ENCODE measurements at regions of chr3 and their contacts with region 1.

Region 1: DNA sequence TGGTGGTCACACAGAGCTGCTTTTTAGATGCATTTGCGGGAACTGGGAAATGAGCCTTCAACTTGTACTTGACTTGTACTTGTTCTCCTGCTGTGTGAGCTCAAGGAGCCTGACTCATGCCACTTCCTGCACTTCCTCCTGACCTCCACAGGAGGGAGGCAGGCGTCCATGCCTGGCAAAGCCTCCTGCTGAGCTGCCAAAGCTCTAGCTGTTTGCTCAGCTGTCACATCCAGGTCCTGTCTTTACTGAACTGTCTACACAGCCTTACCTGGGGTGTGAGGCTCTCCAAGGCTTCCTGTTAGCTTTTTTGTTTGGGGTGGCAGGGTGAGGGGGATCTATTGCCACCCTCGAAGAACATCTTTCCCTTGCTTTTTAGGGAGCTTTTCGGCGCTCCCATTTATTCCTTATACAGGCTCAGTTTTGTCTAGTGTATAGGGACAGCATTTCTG is 6.4 kb downstream of the THPO start:
- DNase-seq: peak; percentile 89
- ATAC-seq: peak; percentile 93
- H3K4me3 ChIP-seq: no peak overlapping the region
- H3K27ac ChIP-seq: no peak overlapping the region
- H3K4me1 ChIP-seq: peaks cover 6% of the 10 kb centered on the region; the same call in 1 of the 2 replicates
- H3K27me3 ChIP-seq: peaks cover 25% of the 10 kb centered on the region
- CTCF ChIP-seq: peak; percentile 99
- POLR2A ChIP-seq: no peak
- RAD21 ChIP-seq: peak; percentile 100

Region 2: GRCh38 chr3:184469423-184469822 is 97.8 kb after region 1 on chr3:
- CTCF ChIA-PET with region 1: interaction called, 6 read pairs
- POLR2A ChIA-PET with region 1: no interaction called
- dilution Hi-C with region 1: no loop called
- in situ Hi-C with region 1: no loop called
- intact Hi-C with region 1: loop called (anchors 2 kb)
- DNase-seq: no peak
- ATAC-seq: peak; percentile 29; the same call in 1 of the 2 replicates
- H3K4me3 ChIP-seq: no peak overlapping the region
- H3K27ac ChIP-seq: no peak overlapping the region
- H3K4me1 ChIP-seq: peaks cover 4% of the 10 kb centered on the region; the same call in 1 of the 2 replicates
- H3K27me3 ChIP-seq: peaks cover 23% of the 10 kb centered on the region
- CTCF ChIP-seq: peak; percentile 42
- POLR2A ChIP-seq: no peak
- RAD21 ChIP-seq: peak; percentile 48

Region 3: GRCh38 chr3:184531626-184532280 is 160.2 kb after region 1 on chr3:
- CTCF ChIA-PET with region 1: interaction called, 5 read pairs
- POLR2A ChIA-PET with region 1: no interaction called
- dilution Hi-C with region 1: loop called (anchors 25 kb)
- in situ Hi-C with region 1: loop called (anchors 5 kb)
- intact Hi-C with region 1: no loop called
- DNase-seq: no peak
- ATAC-seq: no peak
- H3K4me3 ChIP-seq: no peak overlapping the region
- H3K27ac ChIP-seq: no peak overlapping the region
- H3K4me1 ChIP-seq: no peaks in the 10 kb centered on the region
- H3K27me3 ChIP-seq: peaks cover 52% of the 10 kb centered on the region
- CTCF ChIP-seq: no peak
- POLR2A ChIP-seq: no peak
- RAD21 ChIP-seq: no peak

Region 4: DNA sequence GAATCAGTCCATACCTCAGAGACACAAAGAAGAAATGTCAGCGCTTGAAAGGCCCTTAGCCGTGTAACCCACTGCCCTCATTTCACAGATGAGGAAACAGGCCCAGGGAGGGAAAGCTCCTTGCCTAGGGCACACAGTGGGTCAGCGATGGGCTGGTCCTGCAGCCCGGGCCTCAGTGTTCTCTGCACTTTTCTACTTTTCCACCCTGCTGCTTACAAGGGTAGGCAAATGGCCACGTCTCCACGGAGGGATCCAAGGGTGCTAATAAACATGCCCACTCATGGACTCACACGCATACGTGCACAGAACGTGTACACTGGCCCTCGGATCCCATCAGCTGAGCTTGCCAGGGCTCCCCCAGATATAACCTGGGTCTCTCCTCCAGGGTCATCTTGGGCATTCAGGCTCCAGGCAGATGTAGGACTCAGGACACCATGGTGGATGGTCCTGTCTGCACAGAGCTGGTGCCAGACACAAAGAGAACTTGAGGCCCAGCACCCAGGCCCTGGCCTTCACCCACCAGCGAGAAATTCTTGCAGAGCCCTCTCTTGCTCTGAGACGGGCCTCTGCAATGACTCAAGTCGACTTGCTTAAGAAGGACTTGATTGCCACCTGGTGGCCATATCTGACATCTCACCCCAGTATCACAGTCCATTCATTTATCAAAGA is 405.9 kb after region 1 on chr3:
- CTCF ChIA-PET with region 1: interaction called, 3 read pairs
- POLR2A ChIA-PET with region 1: no interaction called
- dilution Hi-C with region 1: no loop called
- in situ Hi-C with region 1: loop called (anchors 10 kb)
- intact Hi-C with region 1: loop called (anchors 5 kb)
- DNase-seq: peak; percentile 97
- ATAC-seq: peak; percentile 95
- H3K4me3 ChIP-seq: no peak overlapping the region
- H3K27ac ChIP-seq: no peak overlapping the region
- H3K4me1 ChIP-seq: peaks cover 10% of the 10 kb centered on the region
- H3K27me3 ChIP-seq: no peaks in the 10 kb centered on the region
- CTCF ChIP-seq: peak; percentile 95
- POLR2A ChIP-seq: no peak
- RAD21 ChIP-seq: peak; percentile 98

Region 5: GRCh38 chr3:184808021-184808420 is 436.4 kb after region 1 on chr3:
- CTCF ChIA-PET with region 1: interaction called, 3 read pairs
- POLR2A ChIA-PET with region 1: no interaction called
- dilution Hi-C with region 1: no loop called
- in situ Hi-C with region 1: loop called (anchors 10 kb)
- intact Hi-C with region 1: loop called (anchors 5 kb)
- DNase-seq: no peak
- ATAC-seq: no peak
- H3K4me3 ChIP-seq: no peak overlapping the region
- H3K27ac ChIP-seq: no peak overlapping the region
- H3K4me1 ChIP-seq: peaks cover 4% of the 10 kb centered on the region
- H3K27me3 ChIP-seq: no peaks in the 10 kb centered on the region
- CTCF ChIP-seq: 0 out of 2 replicates have a peak, but pooled peaks have one; percentile 23
- POLR2A ChIP-seq: no peak
- RAD21 ChIP-seq: no peak

Region 6: DNA sequence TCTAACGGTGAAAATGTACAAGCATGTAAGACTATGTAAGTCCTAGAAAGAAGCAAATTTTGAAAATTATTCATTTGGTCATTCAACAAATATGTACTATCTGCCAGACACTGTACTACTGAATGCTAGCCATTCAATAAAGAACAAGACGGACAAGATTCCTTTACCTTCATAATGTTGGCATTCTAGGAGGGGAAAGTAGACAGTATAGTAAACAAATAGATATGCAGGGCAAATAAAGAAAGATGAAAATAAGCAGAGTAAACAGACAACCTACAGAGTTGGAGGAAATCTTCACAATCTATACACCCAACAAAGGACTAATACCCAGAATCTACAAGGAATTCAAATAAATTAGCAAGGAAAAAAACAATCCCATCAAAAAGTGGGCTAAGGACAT is 748.6 kb after region 1 on chr3:
- CTCF ChIA-PET with region 1: no interaction called
- POLR2A ChIA-PET with region 1: no interaction called
- dilution Hi-C with region 1: no loop called
- in situ Hi-C with region 1: no loop called
- intact Hi-C with region 1: no loop called
- DNase-seq: no peak
- ATAC-seq: no peak
- H3K4me3 ChIP-seq: no peak overlapping the region
- H3K27ac ChIP-seq: no peak overlapping the region
- H3K4me1 ChIP-seq: no peaks in the 10 kb centered on the region
- H3K27me3 ChIP-seq: no peaks in the 10 kb centered on the region
- CTCF ChIP-seq: no peak
- POLR2A ChIP-seq: no peak
- RAD21 ChIP-seq: no peak